ENCODE measurements at regions of chr20 and their contacts with region 1.

Region 1: DNA sequence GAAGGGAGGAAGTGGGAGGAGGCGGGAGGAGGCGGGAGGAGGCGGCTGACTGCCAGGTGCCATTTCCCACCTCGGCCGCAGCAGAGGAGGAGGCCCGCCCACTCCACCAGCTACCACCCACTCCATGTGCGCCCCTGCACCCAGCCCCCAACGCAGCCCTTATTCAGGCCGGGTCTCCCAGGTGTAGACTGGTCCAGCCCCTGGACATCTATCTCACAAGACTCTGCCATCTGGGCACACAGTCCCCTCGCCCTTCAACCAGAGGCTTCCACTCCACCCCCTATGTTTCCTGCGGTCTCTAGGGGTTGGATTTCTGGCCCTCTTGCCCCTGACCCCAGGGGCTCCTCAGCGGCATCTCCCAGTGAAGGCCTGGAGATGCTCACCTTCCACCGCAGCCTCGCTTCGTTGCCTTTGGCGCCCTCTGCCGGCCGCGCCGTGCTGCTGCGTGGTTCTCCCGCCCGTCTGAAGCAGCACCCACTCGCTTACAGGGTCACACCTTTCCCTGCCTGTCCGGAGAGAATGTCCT is 32.6 kb upstream of the FAM83D start:
- DNase-seq: peak; percentile 72 to 91 (median 81)
- ATAC-seq: peak; percentile 80
- H3K4me3 ChIP-seq: peak overlapping the region in 1 of 2 experiments; percentile 22
- H3K4me3 Mint-ChIP-seq: peak overlapping the region; percentile 69
- H3K27ac ChIP-seq: peak overlapping the region; percentile 29 to 82
- H3K27ac Mint-ChIP-seq: peak overlapping the region; percentile 91
- H3K4me1 ChIP-seq: peaks cover 10% of the 10 kb centered on the region
- H3K4me1 Mint-ChIP-seq: peaks cover 31% of the 10 kb centered on the region
- H3K27me3 ChIP-seq: no peaks in the 10 kb centered on the region
- H3K27me3 Mint-ChIP-seq: no peaks in the 10 kb centered on the region
- CTCF ChIP-seq: peak; percentile 85

Region 2: DNA sequence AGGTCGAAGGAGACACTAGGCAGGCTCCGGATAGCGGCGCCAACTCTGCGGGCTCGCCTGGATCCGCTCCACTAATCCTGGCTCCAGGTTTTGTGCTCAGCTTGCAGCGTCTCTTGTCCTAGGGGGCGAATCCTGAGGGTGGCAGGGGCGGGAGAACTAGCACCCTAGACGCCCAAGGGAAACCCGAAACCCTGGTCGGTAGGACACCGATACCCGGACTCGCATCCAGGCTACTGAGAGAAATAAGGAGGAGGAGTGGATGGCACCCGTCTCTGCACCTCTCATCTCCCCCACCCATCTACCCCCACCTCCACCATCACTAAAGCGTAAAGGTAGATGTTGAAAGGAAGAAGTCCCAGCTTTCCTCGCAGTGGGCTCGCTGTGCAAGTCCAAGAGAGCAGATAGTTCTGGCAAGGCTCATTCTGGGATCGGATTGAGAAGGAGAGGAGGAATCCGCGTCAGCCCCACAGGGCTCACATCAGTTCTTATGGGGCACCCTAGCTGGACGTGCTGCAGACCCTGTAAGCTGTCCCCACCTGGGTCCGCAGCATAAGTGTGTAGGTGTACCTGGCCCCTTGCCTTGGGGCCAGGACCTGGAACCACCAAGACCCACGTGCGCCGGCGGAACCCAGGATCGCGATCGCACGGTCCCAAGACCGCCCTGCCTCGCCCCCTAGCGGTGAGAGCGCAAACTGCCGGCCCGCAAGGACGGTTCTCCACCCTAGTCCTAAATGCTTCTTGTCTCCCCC is 162.5 kb before region 1 on chr20:
- CTCF ChIA-PET with region 1: interaction called, 6 read pairs
- POLR2A ChIA-PET with region 1: no interaction called
- intact Hi-C with region 1: loop called in 1 of 2 experiments (anchors 1 kb)
- DNase-seq: peak; percentile 60 to 86 (median 76)
- ATAC-seq: peak; percentile 75
- H3K4me3 ChIP-seq: peak overlapping the region; percentile 46 to 65
- H3K4me3 Mint-ChIP-seq: peak overlapping the region; percentile 73
- H3K27ac ChIP-seq: no peak overlapping the region
- H3K27ac Mint-ChIP-seq: no peak overlapping the region
- H3K4me1 ChIP-seq: peaks cover 34% of the 10 kb centered on the region
- H3K4me1 Mint-ChIP-seq: peaks cover 48% of the 10 kb centered on the region
- H3K27me3 ChIP-seq: peaks cover 60 to 79% of the 10 kb centered on the region in 2 experiments
- H3K27me3 Mint-ChIP-seq: peaks cover 90% of the 10 kb centered on the region
- CTCF ChIP-seq: peak; percentile 97

Region 3: GRCh38 chr20:38790200-38791053 is 103.2 kb before region 1 on chr20:
- CTCF ChIA-PET with region 1: interaction called, 27 read pairs
- POLR2A ChIA-PET with region 1: no interaction called
- intact Hi-C with region 1: no loop called
- DNase-seq: peak in 8 of 9 experiments; percentile 17 to 79 (median 54)
- ATAC-seq: peak; percentile 90
- H3K4me3 ChIP-seq: no peak overlapping the region
- H3K4me3 Mint-ChIP-seq: peak overlapping the region; percentile 30
- H3K27ac ChIP-seq: no peak overlapping the region
- H3K27ac Mint-ChIP-seq: no peak overlapping the region
- H3K4me1 ChIP-seq: no peaks in the 10 kb centered on the region
- H3K4me1 Mint-ChIP-seq: peaks cover 15% of the 10 kb centered on the region
- H3K27me3 ChIP-seq: no peaks in the 10 kb centered on the region
- H3K27me3 Mint-ChIP-seq: no peaks in the 10 kb centered on the region
- CTCF ChIP-seq: peak; percentile 69

Region 4: DNA sequence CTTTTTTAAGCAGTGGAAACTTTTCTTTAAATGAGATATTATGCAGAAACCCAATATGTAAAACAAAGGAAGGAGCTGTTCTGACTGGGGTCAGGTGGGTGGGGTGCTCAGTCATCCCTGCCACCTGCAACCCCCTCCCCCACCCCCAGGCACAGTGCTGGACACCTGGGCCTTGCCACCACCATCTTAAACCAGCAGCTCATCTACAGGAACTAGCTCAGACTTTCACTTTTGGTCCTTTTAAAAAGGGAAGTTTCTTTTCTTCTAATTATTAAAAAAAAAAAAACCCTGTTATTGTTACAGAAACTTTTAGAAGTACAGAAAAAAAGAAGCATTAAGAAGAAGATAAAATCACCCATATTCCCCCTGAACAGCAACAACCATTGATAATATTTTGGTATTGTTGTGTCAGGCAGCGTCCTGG is 51.1 kb before region 1 on chr20:
- CTCF ChIA-PET with region 1: interaction called, 14 read pairs
- POLR2A ChIA-PET with region 1: interaction called, 5 read pairs
- intact Hi-C with region 1: loop called (anchors 2 to 5 kb)
- DNase-seq: peak in 3 of 9 experiments; percentile 57 to 72 (median 58)
- ATAC-seq: peak; percentile 19
- H3K4me3 ChIP-seq: no peak overlapping the region
- H3K4me3 Mint-ChIP-seq: peak overlapping the region; percentile 64
- H3K27ac ChIP-seq: peak overlapping the region; percentile 35 to 95
- H3K27ac Mint-ChIP-seq: peak overlapping the region; percentile 96
- H3K4me1 ChIP-seq: peaks cover 58% of the 10 kb centered on the region
- H3K4me1 Mint-ChIP-seq: peaks cover 84% of the 10 kb centered on the region
- H3K27me3 ChIP-seq: no peaks in the 10 kb centered on the region
- H3K27me3 Mint-ChIP-seq: no peaks in the 10 kb centered on the region
- CTCF ChIP-seq: no peak

Region 5: DNA sequence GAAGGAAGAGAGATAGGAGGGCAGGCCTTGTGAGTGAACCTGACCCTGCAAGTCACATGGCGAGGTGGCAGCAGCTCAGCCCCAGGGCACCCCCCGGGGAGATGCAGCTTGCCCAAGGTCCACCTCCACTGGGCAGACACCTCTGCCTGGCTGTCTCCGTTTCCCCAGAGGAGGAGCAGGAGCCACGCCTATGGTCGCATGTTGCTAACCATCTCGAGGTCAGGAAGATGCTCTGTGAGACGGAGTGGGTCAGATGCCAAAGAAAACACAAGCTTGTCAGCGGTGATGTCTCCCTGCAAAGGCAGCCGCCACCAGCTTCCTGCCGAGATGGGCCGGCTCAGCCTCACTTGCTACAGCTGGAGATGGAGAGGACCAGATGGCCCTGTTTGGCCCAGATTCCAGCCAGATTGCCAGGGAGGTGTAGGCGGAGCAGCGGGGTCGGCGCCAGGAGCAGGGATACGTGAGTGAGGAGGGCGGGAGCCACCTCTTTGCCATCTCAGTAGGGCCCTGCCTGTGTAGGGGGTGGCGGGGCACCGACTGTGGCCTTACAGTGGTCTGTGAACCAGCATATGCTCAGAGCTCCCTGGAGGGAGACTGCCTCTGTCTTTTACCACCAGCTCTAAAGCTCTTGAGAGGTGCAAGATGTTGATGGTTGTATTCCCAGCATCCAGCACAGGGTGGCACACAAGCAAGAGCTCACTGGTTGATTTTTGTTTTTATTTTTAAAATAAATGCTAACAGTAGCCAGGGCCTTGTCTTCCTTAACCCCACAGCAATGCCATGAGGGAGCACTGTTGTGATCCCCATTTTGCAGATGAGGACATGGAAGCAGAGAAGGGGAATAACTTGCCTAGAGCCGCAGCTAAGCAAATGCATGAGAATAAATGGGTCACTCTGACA is 10.3 kb before region 1 on chr20:
- CTCF ChIA-PET with region 1: interaction called, 54 read pairs
- POLR2A ChIA-PET with region 1: interaction called, 11 read pairs
- intact Hi-C with region 1: no loop called
- DNase-seq: peak in 4 of 9 experiments; percentile 34 to 53 (median 38)
- ATAC-seq: peak; percentile 37
- H3K4me3 ChIP-seq: no peak overlapping the region
- H3K4me3 Mint-ChIP-seq: peak overlapping the region; percentile 50
- H3K27ac ChIP-seq: peak overlapping the region in 1 of 2 experiments; percentile 48
- H3K27ac Mint-ChIP-seq: peak overlapping the region; percentile 89
- H3K4me1 ChIP-seq: peaks cover 19% of the 10 kb centered on the region
- H3K4me1 Mint-ChIP-seq: peaks cover 63% of the 10 kb centered on the region
- H3K27me3 ChIP-seq: no peaks in the 10 kb centered on the region
- H3K27me3 Mint-ChIP-seq: no peaks in the 10 kb centered on the region
- CTCF ChIP-seq: no peak

Measured in CD8-positive, alpha-beta T cell (primary cell).